Aorta (tissue), 5 donors: ENCODE measurements at regions of chr2 and their contacts with region 1.

Region 1: DNA sequence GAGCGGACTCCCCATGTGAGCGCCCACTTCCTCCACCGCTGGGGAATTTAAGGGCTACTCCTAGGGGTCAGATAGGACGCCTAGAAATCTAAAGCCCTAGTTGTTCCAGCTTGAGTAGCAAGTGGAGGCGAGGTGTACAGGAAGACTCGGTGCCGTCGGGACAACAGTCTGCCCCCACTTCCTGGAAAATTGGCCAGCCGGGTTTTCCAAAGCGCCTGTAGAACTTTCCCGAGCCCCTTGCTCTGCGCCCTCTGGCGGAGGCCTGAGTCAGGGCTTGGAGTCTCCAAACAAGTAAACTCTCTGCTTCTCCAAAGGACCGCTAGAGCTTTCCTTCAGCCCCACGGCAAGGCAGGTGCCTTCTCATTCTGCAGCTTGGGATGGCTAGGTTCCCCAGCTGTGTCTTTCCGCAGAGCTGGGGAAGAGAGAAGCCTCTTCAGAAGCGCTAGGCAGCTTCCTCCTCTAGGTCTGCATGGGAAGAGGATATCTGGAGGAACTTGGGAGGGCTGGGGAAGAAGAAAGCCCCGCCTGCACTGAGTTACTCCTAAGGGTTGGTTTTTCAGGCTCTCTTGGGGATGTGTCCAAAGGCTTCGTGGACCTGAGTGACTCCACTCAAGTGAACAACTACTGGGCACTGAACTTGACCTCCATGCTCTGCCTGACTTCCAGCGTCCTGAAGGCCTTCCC is 688 bp downstream of the SPR start:
- DNase-seq: peak; percentile 93 to 97
- ATAC-seq: peak; percentile 83
- H3K4me3 ChIP-seq: peak overlapping the region; percentile 49 to 72
- H3K27ac ChIP-seq: peak overlapping the region; percentile 57 to 78
- H3K4me1 ChIP-seq: no peaks in the 10 kb centered on the region
- H3K27me3 ChIP-seq: no peaks in the 10 kb centered on the region

Region 2: GRCh38 chr2:72901426-72901825 is 13.5 kb after region 1 on chr2:
- intact Hi-C with region 1: no loop called
- DNase-seq: no peak
- ATAC-seq: no peak
- H3K4me3 ChIP-seq: no peak overlapping the region
- H3K27ac ChIP-seq: no peak overlapping the region
- H3K4me1 ChIP-seq: no peaks in the 10 kb centered on the region
- H3K27me3 ChIP-seq: peaks cover 0 to 1% of the 10 kb centered on the region in 2 donors

Region 3: GRCh38 chr2:72973566-72974435 is 85.9 kb after region 1 on chr2:
- intact Hi-C with region 1: loop called in 1 of 2 experiments (anchors 5 kb)
- DNase-seq: peak in 1 of 2 donors; percentile 13
- ATAC-seq: peak; percentile 77
- H3K4me3 ChIP-seq: no peak overlapping the region
- H3K27ac ChIP-seq: no peak overlapping the region
- H3K4me1 ChIP-seq: no peaks in the 10 kb centered on the region
- H3K27me3 ChIP-seq: no peaks in the 10 kb centered on the region

Region 4: DNA sequence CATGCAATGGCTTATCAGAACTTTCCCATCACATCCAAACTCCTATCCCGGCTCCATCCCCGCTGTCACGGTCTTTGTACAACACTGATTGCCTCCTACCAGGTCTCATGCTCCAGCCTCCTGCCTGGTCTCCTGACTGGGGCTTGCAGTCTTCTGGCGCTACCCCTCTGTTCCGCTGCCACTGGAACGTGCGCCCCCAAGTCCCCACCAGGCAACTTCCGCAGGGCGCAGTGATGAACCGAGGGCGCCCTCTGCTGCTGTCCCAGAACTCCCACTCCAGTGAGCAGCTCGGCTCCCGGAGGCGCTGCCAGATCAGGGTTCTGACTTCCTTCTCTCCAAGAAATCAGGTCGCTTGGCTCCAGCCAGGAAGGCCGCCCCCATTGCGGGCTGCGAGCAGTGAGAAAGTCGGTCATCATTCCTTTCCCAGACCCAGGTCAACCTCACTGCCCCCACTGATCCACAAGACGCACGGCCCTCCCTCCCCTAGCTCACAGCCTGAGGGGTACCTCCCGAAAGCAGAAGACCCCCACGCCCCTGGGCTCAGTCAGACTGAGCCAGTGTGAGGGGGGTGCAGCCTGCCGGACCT is 268.7 kb after region 1 on chr2:
- intact Hi-C with region 1: loop called (anchors 2 to 5 kb)
- DNase-seq: peak; percentile 78 to 91
- ATAC-seq: peak; percentile 91
- H3K4me3 ChIP-seq: no peak overlapping the region
- H3K27ac ChIP-seq: no peak overlapping the region
- H3K4me1 ChIP-seq: no peaks in the 10 kb centered on the region
- H3K27me3 ChIP-seq: no peaks in the 10 kb centered on the region

Region 5: DNA sequence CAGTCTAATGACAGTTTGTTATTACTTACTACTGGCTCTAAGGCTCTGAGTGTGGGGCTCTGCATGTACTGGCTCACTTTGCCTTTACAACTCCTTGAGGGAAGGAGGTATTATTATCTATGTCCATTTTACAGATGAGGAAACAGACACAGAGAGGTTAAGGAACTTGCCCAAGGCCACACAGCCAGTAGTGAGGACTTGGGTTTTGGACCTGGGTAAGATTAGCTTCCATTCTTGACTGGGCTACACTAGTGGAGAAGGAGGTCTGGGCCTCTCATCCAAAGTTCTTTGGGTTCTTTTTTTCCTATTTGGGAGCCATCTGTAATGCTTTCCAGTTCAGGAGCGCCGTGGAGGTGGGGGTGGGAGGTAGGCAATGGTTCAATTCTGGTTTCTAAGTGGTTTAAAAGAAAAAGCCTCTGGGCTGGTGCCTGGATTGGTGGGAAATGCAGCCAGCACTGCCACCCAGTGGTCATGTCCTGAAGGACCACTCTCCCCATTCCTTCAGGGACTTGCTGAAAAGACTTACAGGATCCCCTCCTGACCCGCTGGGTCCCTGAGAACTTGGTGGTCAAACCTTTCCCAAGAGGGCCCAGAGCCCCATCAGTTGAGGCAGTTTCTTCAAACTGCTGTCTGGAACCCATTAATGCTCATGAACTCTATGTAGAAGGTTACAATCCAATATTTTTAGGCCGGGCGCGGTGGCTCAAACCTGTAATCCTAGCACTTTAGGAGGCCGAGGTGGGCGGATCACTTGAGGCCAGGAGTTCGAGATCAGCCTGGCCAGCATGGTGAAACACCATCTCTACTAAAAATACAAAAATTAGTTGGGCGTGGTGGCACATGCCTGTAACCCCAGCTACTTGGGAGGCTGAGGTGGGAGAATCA is 275.8 kb after region 1 on chr2:
- intact Hi-C with region 1: loop called in 1 of 2 experiments (anchors 5 kb)
- DNase-seq: peak; percentile 71 to 86
- ATAC-seq: peak; percentile 82
- H3K4me3 ChIP-seq: no peak overlapping the region
- H3K27ac ChIP-seq: no peak overlapping the region
- H3K4me1 ChIP-seq: no peaks in the 10 kb centered on the region
- H3K27me3 ChIP-seq: no peaks in the 10 kb centered on the region

Region 6: DNA sequence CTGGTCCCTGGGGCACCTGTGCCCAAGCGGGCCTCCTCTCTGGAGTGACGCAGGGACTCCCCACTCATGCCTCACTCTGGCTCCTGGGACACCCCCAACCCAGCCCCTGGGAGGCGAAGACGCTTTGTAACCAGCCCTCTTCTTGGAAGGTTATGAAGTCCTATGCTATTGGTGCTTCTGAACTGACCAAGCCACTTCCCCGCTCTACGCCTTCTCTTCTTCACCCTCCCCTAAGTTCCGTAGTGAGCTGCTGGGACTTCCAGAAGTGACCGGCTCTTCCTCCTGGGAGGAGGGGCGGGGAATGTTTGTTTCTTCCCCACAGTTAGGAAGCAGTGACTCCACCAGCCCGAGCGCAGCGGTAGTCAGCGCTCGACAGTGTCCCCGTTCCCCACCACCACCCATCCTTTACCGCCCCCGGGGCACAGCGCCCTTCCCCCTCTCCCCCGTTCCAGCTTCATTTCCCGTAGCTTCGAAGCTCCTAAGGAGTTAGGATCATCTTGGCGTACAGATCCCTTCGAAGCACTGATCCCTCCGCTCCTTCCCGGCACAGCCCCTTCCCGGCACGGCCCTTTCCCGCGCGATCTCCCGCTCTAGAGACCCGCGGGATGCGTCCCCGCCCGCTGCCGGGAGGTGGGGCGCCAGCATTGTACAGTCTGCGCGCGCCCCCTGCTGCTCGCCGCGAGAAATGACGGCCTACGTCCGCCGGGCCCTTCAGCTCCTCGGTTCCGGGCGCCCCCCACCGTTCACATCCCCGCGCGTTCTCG is 289.2 kb after region 1 on chr2:
- intact Hi-C with region 1: loop called (anchors 5 kb)
- DNase-seq: peak; percentile 94 to 98
- ATAC-seq: peak; percentile 97
- H3K4me3 ChIP-seq: peak overlapping the region; percentile 2 to 8
- H3K27ac ChIP-seq: peak overlapping the region in 1 of 2 donors; percentile 28
- H3K4me1 ChIP-seq: no peaks in the 10 kb centered on the region
- H3K27me3 ChIP-seq: no peaks in the 10 kb centered on the region

Region 7: DNA sequence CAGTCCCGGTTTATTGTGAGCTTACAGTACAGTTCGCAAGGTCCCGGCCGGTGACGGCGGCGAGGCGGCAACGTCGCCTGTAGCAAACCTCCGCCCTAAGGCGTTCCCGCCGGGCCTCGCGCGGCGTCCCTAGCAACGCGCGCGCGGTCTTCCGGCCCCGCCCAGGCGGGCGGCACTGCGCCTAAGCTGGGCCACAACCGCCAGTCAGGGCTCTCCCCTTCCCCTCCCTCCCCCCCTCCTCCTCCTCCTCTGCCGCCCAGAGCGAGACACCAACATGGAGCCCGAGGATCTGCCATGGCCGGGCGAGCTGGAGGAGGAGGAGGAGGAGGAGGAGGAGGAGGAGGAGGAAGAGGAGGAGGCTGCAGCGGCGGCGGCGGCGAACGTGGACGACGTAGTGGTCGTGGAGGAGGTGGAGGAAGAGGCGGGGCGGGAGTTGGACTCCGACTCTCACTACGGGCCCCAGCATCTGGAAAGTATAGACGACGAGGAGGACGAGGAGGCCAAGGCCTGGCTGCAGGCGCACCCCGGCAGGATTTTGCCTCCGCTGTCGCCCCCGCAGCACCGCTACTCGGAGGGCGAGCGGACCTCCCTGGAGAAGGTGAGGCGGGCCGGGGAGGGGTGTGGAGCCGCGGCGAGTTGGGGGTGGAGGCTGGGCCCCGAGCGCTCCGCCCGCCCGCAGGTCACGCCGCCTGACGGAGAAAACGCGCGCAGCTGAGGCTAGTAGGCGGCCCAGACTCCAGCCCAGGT is 497.9 kb after region 1 on chr2 and contains the start of gene ALMS1:
- intact Hi-C with region 1: loop called in 1 of 2 experiments (anchors 10 kb)
- DNase-seq: peak; percentile 94 to 95
- ATAC-seq: peak; percentile 98
- H3K4me3 ChIP-seq: peak within 1 kb of the TSS; percentile 66 to 93
- H3K27ac ChIP-seq: peak within 1 kb of the TSS in 1 of 2 donors; percentile 72
- H3K4me1 ChIP-seq: peaks cover 2 to 4% of the 10 kb centered on the region in 2 donors
- H3K27me3 ChIP-seq: no peaks in the 10 kb centered on the region
- total RNA-seq, gene ALMS1: 24.5 to 26.4 TPM